Panc1 (cell line): ENCODE measurements at regions of chr5 and their contacts with region 1.

Region 1: DNA sequence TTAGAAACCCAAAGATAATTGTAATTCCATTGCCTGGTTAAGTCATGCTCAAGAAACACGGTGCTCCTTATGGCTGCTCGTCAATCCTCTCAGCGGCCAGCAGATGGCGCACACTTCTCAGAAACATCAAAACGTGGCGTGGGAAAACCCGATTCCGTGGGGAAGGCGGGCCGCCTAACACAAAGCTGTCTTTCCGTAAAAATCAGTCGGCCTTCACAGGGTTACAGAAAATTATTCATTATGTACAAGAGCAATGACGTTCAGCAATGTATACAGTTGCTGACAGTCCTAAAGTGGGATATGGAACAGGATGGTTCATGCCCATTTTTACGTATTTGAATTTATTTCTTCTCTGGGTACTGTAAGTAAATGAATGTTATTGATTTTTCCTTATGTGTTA is 83.5 kb downstream of the PDE4D start:
- DNase-seq: no peak
- ATAC-seq: peak; percentile 79; the same call in 1 of the 2 replicates
- H3K4me3 ChIP-seq: peak overlapping the region in 1 of 2 experiments; percentile 39; a peak in 2 of 4 replicates
- H3K27ac ChIP-seq: no peak overlapping the region
- H3K4me1 ChIP-seq: no peaks in the 10 kb centered on the region
- H3K27me3 ChIP-seq: peaks cover 3% of the 10 kb centered on the region; the same call in 1 of the 2 replicates
- CTCF ChIP-seq: peak; percentile 92

Region 2: DNA sequence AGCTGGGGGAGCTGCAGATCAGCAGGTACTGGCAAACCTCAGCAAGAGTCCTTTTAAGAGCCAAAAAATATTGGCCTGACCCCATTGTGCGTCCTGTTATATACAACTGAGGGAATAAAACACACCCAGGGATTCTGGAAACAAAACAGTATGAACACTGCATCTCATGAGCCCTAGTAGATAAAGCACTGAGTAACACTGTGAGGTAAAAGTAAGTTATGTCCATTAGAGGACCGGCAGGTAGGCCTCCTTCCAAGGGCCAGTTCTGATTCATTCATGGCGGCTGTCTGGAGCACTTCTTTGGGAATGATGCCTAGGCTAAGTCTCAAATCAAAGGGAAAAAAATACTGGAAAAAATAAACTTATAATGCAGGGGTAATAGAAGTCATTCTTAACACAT is 18.6 kb after region 1 on chr5:
- CTCF ChIA-PET with region 1: no interaction called
- POLR2A ChIA-PET with region 1: no interaction called
- in situ Hi-C with region 1: no loop called
- intact Hi-C with region 1: no loop called
- DNase-seq: no peak
- ATAC-seq: no peak
- H3K4me3 ChIP-seq: no peak overlapping the region
- H3K27ac ChIP-seq: no peak overlapping the region
- H3K4me1 ChIP-seq: no peaks in the 10 kb centered on the region
- H3K27me3 ChIP-seq: no peaks in the 10 kb centered on the region
- CTCF ChIP-seq: no peak

Region 3: DNA sequence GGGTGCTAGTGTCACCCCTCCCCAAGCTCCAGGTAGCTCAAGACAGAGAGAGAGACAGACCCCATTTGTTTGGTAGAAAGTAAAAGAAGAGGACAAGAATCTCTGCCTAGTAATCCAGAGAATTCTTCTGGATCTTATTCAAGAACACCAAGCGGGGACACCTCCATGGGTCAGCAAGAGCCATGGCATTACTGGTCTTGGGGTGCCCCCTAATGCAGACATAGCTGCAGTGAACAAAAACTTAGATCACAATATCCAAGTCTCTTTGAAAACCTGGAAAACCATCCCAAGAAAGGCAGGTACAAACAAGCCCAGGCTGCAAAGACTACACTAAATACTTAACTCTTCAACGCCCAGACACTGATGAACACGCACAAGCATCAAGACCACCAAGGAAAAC is 113.4 kb after region 1 on chr5:
- CTCF ChIA-PET with region 1: no interaction called
- POLR2A ChIA-PET with region 1: no interaction called
- in situ Hi-C with region 1: no loop called
- intact Hi-C with region 1: loop called (anchors 10 kb)
- DNase-seq: no peak
- ATAC-seq: no peak
- H3K4me3 ChIP-seq: no peak overlapping the region
- H3K27ac ChIP-seq: no peak overlapping the region
- H3K4me1 ChIP-seq: no peaks in the 10 kb centered on the region
- H3K27me3 ChIP-seq: no peaks in the 10 kb centered on the region
- CTCF ChIP-seq: 0 out of 2 replicates have a peak, but pooled peaks have one; percentile 9

Region 4: GRCh38 chr5:60161340-60161934 is 351.4 kb after region 1 on chr5:
- CTCF ChIA-PET with region 1: no interaction called
- POLR2A ChIA-PET with region 1: no interaction called
- in situ Hi-C with region 1: no loop called
- intact Hi-C with region 1: loop called (anchors 5 kb)
- DNase-seq: peak; percentile 7
- ATAC-seq: no peak
- H3K4me3 ChIP-seq: no peak overlapping the region
- H3K27ac ChIP-seq: no peak overlapping the region
- H3K4me1 ChIP-seq: no peaks in the 10 kb centered on the region
- H3K27me3 ChIP-seq: no peaks in the 10 kb centered on the region
- CTCF ChIP-seq: peak; percentile 43; the same call in 1 of the 2 replicates

Region 5: GRCh38 chr5:60382716-60383115 is 572.7 kb after region 1 on chr5:
- CTCF ChIA-PET with region 1: no interaction called
- POLR2A ChIA-PET with region 1: no interaction called
- in situ Hi-C with region 1: no loop called
- intact Hi-C with region 1: loop called (anchors 2 kb)
- DNase-seq: peak; percentile 4
- ATAC-seq: no peak
- H3K4me3 ChIP-seq: no peak overlapping the region
- H3K27ac ChIP-seq: no peak overlapping the region
- H3K4me1 ChIP-seq: no peaks in the 10 kb centered on the region
- H3K27me3 ChIP-seq: no peaks in the 10 kb centered on the region
- CTCF ChIP-seq: peak; percentile 45; the same call in 1 of the 2 replicates

Region 6: DNA sequence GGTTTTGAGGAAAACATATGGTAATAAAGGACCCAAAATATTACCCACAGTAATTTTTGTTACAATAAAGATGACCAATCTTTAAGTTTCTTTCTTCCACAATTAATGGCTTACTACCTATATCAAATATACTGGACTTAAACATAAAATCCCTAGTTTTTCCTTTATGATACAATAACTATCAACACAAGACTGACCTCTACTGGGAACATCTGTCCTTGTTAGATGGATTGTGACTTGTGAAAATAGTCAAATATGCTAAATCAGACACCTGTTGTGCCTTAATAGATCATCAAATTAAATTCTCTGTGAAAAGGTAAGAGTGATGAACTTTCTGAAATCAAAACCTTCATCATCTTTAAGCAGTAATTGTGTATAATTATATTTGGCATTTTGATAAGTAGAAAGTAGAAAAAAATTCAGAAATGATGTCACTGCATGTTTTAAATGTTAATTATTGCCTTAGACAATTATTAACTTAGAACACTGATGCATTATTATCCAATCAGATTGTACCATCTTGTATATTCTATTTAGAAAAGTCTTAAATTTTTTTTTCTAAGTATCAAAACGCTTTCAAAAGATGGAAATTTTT is 776.4 kb after region 1 on chr5:
- CTCF ChIA-PET with region 1: no interaction called
- POLR2A ChIA-PET with region 1: no interaction called
- in situ Hi-C with region 1: no loop called
- intact Hi-C with region 1: loop called (anchors 5 kb)
- DNase-seq: no peak
- ATAC-seq: no peak
- H3K4me3 ChIP-seq: no peak overlapping the region
- H3K27ac ChIP-seq: no peak overlapping the region
- H3K4me1 ChIP-seq: no peaks in the 10 kb centered on the region
- H3K27me3 ChIP-seq: no peaks in the 10 kb centered on the region
- CTCF ChIP-seq: peak; percentile 23; the same call in 1 of the 2 replicates

Region 7: GRCh38 chr5:60649283-60649917 is 839.4 kb after region 1 on chr5:
- CTCF ChIA-PET with region 1: no interaction called
- POLR2A ChIA-PET with region 1: no interaction called
- in situ Hi-C with region 1: no loop called
- intact Hi-C with region 1: loop called (anchors 5 kb)
- DNase-seq: peak; percentile 20
- ATAC-seq: no peak
- H3K4me3 ChIP-seq: no peak overlapping the region
- H3K27ac ChIP-seq: no peak overlapping the region
- H3K4me1 ChIP-seq: no peaks in the 10 kb centered on the region
- H3K27me3 ChIP-seq: no peaks in the 10 kb centered on the region
- CTCF ChIP-seq: peak; percentile 70; the same call in 1 of the 2 replicates

Region 8: GRCh38 chr5:60668686-60669304 is 858.8 kb after region 1 on chr5:
- CTCF ChIA-PET with region 1: no interaction called
- POLR2A ChIA-PET with region 1: no interaction called
- in situ Hi-C with region 1: no loop called
- intact Hi-C with region 1: loop called (anchors 2 kb)
- DNase-seq: no peak
- ATAC-seq: no peak
- H3K4me3 ChIP-seq: no peak overlapping the region
- H3K27ac ChIP-seq: no peak overlapping the region
- H3K4me1 ChIP-seq: no peaks in the 10 kb centered on the region
- H3K27me3 ChIP-seq: no peaks in the 10 kb centered on the region
- CTCF ChIP-seq: peak; percentile 69; the same call in 1 of the 2 replicates